Mammary epithelial cell (primary cell): ENCODE measurements at regions of chr6 and their contacts with region 1.

Region 1: GRCh38 chr6:146878168-146878943 is 279.6 kb downstream of the ADGB start:
- DNase-seq: peak; percentile 45
- H3K4me3 ChIP-seq: no peak overlapping the region
- H3K27ac ChIP-seq: no peak overlapping the region
- H3K4me1 ChIP-seq: no peaks in the 10 kb centered on the region
- H3K27me3 ChIP-seq: no peaks in the 10 kb centered on the region
- CTCF ChIP-seq: no peak

Region 2: DNA sequence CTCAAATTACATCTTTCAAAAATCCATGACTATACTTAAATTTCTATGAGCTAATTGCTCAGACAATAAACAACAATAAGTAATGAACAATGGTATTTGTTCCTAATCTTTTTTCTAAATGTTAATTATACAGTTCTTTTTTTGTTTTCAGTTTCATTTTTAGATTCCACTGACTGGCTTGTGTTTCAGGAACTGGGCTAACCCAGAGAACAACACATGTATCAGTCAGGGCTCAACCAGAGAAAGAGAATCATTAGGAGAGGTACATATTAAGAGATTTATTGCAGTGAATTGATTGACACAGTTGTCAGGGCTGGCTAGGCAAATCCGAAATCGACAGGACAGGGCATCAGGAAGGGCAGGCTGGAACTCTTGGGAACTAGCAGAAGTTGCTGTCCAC is 666.7 kb before region 1 on chr6:
- CTCF ChIA-PET with region 1: no interaction called
- dilution Hi-C with region 1: no loop called
- in situ Hi-C with region 1: no loop called
- intact Hi-C with region 1: no loop called
- DNase-seq: no peak
- H3K4me3 ChIP-seq: no peak overlapping the region
- H3K27ac ChIP-seq: no peak overlapping the region
- H3K4me1 ChIP-seq: no peaks in the 10 kb centered on the region
- H3K27me3 ChIP-seq: peaks cover 4% of the 10 kb centered on the region
- CTCF ChIP-seq: no peak

Region 3: GRCh38 chr6:146905181-146905704 is 26.9 kb after region 1 on chr6:
- CTCF ChIA-PET with region 1: no interaction called
- dilution Hi-C with region 1: no loop called
- in situ Hi-C with region 1: no loop called
- intact Hi-C with region 1: no loop called
- DNase-seq: peak; percentile 86
- H3K4me3 ChIP-seq: no peak overlapping the region
- H3K27ac ChIP-seq: no peak overlapping the region
- H3K4me1 ChIP-seq: peaks cover 10% of the 10 kb centered on the region
- H3K27me3 ChIP-seq: no peaks in the 10 kb centered on the region
- CTCF ChIP-seq: no peak

Region 4: GRCh38 chr6:147106759-147107401 is 228.5 kb after region 1 on chr6:
- CTCF ChIA-PET with region 1: no interaction called
- dilution Hi-C with region 1: no loop called
- in situ Hi-C with region 1: no loop called
- intact Hi-C with region 1: no loop called
- DNase-seq: no peak
- H3K4me3 ChIP-seq: no peak overlapping the region
- H3K27ac ChIP-seq: no peak overlapping the region
- H3K4me1 ChIP-seq: no peaks in the 10 kb centered on the region
- H3K27me3 ChIP-seq: no peaks in the 10 kb centered on the region
- CTCF ChIP-seq: no peak

Region 5: GRCh38 chr6:147238164-147238563 is 359.8 kb after region 1 on chr6:
- CTCF ChIA-PET with region 1: interaction called, 18 read pairs
- dilution Hi-C with region 1: no loop called
- in situ Hi-C with region 1: no loop called
- intact Hi-C with region 1: no loop called
- DNase-seq: no peak
- H3K4me3 ChIP-seq: no peak overlapping the region
- H3K27ac ChIP-seq: no peak overlapping the region
- H3K4me1 ChIP-seq: no peaks in the 10 kb centered on the region
- H3K27me3 ChIP-seq: no peaks in the 10 kb centered on the region
- CTCF ChIP-seq: no peak